B cell (primary cell): ENCODE measurements at regions of chr17 and their contacts with region 1.

Region 1: DNA sequence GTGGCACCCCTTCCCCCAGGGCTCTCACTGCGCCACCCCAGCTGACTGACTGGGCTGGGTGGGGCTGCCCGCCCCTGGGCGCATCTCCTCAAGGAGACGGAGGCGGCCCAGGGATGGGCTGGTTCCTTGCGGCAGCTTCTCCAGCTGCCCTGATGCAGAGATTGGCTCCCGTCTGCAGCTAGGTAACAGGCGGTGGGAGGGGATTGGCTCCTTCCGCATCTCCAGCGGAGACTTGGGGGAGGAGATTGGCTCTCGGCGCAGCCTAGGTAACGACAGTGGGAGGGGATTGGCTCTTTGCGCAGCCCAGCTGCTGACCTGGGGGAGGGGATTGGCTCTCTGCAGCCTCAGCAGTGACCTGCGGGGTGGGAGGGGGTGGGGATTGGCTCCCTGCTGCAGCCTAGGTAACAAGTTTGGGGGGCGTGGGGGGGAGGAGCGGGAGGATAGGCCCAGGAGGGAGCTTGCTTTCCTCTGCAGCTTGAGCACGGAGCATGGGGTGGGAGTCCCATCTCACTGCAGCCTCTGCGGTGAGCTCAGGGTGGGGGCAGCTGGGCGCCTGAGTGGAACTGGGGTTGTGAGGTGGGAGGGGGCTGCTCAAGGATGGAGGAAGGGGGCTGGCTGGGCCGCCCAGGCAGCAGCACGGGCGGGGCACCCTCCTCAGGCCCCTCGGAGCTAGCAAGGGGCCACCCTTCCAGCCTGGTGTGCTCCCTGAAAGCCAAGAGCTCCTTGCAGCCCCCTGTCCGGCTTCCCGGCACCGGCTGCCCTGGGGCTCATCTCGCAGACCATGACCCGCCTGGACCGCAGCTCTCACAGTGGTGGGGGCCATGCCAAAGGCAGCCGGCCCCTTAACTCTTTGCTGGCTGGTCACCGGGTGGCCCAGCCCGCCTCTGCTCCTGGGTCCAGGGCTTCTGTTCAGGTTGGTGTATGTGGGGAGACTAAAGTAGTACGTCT is 6.4 kb downstream of the NFE2L1 start:
- DNase-seq: no peak
- ATAC-seq: no peak
- H3K4me3 ChIP-seq: no peak overlapping the region
- H3K4me3 Mint-ChIP-seq: peak overlapping the region; percentile 77
- H3K27ac ChIP-seq: peak overlapping the region in 1 of 2 donors; percentile 76
- H3K27ac Mint-ChIP-seq: peak overlapping the region; percentile 91
- H3K4me1 ChIP-seq: peaks cover 31 to 41% of the 10 kb centered on the region in 2 donors
- H3K4me1 Mint-ChIP-seq: peaks cover 62% of the 10 kb centered on the region
- H3K27me3 ChIP-seq: no peaks in the 10 kb centered on the region
- H3K27me3 Mint-ChIP-seq: no peaks in the 10 kb centered on the region
- CTCF ChIP-seq: no peak

Region 2: GRCh38 chr17:47941236-47941994 is 113.1 kb before region 1 on chr17 and contains the start of gene PNPO:
- CTCF ChIA-PET with region 1: no interaction called
- POLR2A ChIA-PET with region 1: no interaction called
- intact Hi-C with region 1: no loop called
- DNase-seq: peak; percentile 94
- ATAC-seq: peak; percentile 99
- H3K4me3 ChIP-seq: peak within 1 kb of the TSS; percentile 50 to 84 (median 76)
- H3K4me3 Mint-ChIP-seq: peak within 1 kb of the TSS; percentile 88
- H3K27ac ChIP-seq: peak within 1 kb of the TSS; percentile 63 to 83
- H3K27ac Mint-ChIP-seq: peak within 1 kb of the TSS; percentile 82
- H3K4me1 ChIP-seq: peaks cover 11 to 22% of the 10 kb centered on the region in 2 donors
- H3K4me1 Mint-ChIP-seq: peaks cover 31% of the 10 kb centered on the region
- H3K27me3 ChIP-seq: no peaks in the 10 kb centered on the region
- H3K27me3 Mint-ChIP-seq: no peaks in the 10 kb centered on the region
- CTCF ChIP-seq: no peak
- total RNA-seq, gene PNPO: 12.4 and 14.7 TPM in 2 replicates

Region 3: GRCh38 chr17:48037036-48037837 is 17.3 kb before region 1 on chr17 and contains the start of gene COPZ2:
- CTCF ChIA-PET with region 1: interaction called, 10 read pairs
- POLR2A ChIA-PET with region 1: no interaction called
- intact Hi-C with region 1: no loop called
- DNase-seq: peak; percentile 79
- ATAC-seq: peak; percentile 96
- H3K4me3 ChIP-seq: peak within 1 kb of the TSS; percentile 12 to 76 (median 70)
- H3K4me3 Mint-ChIP-seq: peak within 1 kb of the TSS; percentile 90
- H3K27ac ChIP-seq: no peak within 1 kb of the TSS
- H3K27ac Mint-ChIP-seq: peak within 1 kb of the TSS; percentile 60
- H3K4me1 ChIP-seq: peaks cover 15% of the 10 kb centered on the region in 2 donors
- H3K4me1 Mint-ChIP-seq: peaks cover 15% of the 10 kb centered on the region
- H3K27me3 ChIP-seq: peaks cover 0 to 38% (median 9%) of the 10 kb centered on the region in 4 experiments
- H3K27me3 Mint-ChIP-seq: peaks cover 24% of the 10 kb centered on the region
- CTCF ChIP-seq: peak; percentile 94
- total RNA-seq, gene COPZ2: 1.2 and 2.3 TPM in 2 replicates

Region 4: GRCh38 chr17:48738803-48739526 is 684.5 kb after region 1 on chr17:
- CTCF ChIA-PET with region 1: no interaction called
- POLR2A ChIA-PET with region 1: no interaction called
- intact Hi-C with region 1: no loop called
- DNase-seq: peak; percentile 57
- ATAC-seq: no peak
- H3K4me3 ChIP-seq: peak overlapping the region in 1 of 5 experiments; percentile 19
- H3K4me3 Mint-ChIP-seq: peak overlapping the region; percentile 52
- H3K27ac ChIP-seq: no peak overlapping the region
- H3K27ac Mint-ChIP-seq: peak overlapping the region; percentile 2
- H3K4me1 ChIP-seq: peaks cover 8 to 15% of the 10 kb centered on the region in 2 donors
- H3K4me1 Mint-ChIP-seq: peaks cover 7% of the 10 kb centered on the region
- H3K27me3 ChIP-seq: peaks cover 1 to 90% (median 57%) of the 10 kb centered on the region in 4 experiments
- H3K27me3 Mint-ChIP-seq: peaks cover 79% of the 10 kb centered on the region
- CTCF ChIP-seq: no peak